ENCODE measurements at regions of chr1 and their contacts with region 1.

Region 1: DNA sequence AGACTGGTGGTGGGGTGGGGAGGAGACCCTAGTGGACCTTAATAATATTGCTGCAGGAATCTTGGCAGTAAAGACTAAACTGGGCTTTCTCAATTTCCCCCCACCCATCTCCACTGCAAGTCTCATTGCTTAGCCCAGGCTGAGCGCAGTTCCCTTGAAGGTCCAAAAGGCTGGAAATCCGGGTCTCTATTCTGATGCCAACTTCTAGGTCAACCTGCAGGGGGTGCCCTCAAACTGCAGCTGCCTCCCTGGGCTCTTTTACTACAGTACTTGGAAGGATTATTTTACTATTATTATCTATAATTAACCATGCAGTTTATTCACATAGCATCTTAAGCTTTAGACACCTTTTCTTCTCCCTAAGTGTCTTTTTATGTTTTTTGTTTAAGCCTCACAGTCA is 85.4 kb upstream of the WARS2 start:
- DNase-seq: no peak
- ATAC-seq: no peak
- H3K4me3 ChIP-seq: no peak overlapping the region
- H3K27ac ChIP-seq: no peak overlapping the region
- H3K4me1 ChIP-seq: peaks cover 15 to 21% of the 10 kb centered on the region in 2 donors
- H3K27me3 ChIP-seq: no peaks in the 10 kb centered on the region
- CTCF ChIP-seq: peak in 2 of 5 experiments; percentile 16 to 24
- POLR2A ChIP-seq: no peak

Region 2: DNA sequence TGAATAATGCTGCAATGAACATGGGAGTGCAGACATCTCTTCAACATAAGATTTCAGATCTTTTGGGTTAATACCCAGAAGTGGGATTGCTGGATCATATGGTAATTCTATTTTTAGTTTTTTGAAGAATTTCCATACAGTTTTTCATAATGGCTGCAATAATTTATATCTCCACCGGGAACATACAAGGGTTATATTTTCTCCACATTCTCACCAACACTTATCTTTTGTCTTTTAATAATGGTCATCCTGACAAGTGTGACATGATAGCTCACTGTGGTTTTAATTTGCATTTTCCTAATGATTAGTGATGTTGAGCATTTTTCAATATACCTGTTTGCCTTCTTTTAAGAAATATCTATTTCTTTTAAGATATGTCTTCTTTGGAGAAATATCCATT is 40.9 kb before region 1 on chr1:
- in situ Hi-C with region 1: no loop called
- intact Hi-C with region 1: no loop called
- DNase-seq: no peak
- ATAC-seq: no peak
- H3K4me3 ChIP-seq: no peak overlapping the region
- H3K27ac ChIP-seq: no peak overlapping the region
- H3K4me1 ChIP-seq: no peaks in the 10 kb centered on the region
- H3K27me3 ChIP-seq: no peaks in the 10 kb centered on the region
- CTCF ChIP-seq: no peak
- POLR2A ChIP-seq: no peak

Region 3: DNA sequence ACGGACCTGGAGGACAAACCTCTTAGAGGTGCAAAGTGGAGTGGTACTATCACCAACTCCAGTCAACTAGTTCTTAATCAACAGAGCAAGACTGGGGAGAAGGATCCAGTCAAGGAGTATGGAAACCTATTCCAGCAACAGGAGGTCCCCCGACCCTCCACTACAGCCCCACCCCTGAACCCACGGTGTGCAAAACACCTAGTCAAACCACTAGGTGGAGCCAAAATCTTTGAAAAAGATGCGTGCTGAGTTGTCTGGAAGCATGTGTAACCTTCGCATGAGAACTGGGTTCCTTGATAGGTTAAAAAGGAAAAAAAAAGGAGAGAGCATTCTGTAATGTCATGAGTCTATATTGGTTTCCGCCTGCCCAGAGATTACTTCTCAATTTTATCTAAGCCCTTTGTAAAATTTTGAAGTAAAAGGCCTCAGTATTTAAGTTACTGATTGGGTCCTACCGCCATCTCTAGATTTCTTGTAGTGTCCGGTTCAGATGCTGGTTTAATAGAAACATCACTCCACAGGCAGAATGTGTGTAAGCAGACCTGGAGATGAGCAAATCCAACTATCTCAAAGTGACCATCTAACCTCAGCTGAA is 60.9 kb after region 1 on chr1:
- in situ Hi-C with region 1: loop called in 1 of 4 experiments (anchors 10 kb)
- intact Hi-C with region 1: no loop called
- DNase-seq: no peak
- ATAC-seq: no peak
- H3K4me3 ChIP-seq: no peak overlapping the region
- H3K27ac ChIP-seq: no peak overlapping the region
- H3K4me1 ChIP-seq: no peaks in the 10 kb centered on the region
- H3K27me3 ChIP-seq: no peaks in the 10 kb centered on the region
- CTCF ChIP-seq: no peak
- POLR2A ChIP-seq: no peak

Measured in gastrocnemius medialis (tissue), 4 donors.